SK-N-SH (cell line): ENCODE measurements at regions of chr17 and their contacts with region 1.

Region 1: GRCh38 chr17:76843703-76844484 is 24.3 kb upstream of the MGAT5B start:
- DNase-seq: peak; percentile 59
- H3K4me3 ChIP-seq: no peak overlapping the region
- H3K27ac ChIP-seq: peak overlapping the region in 1 of 2 experiments; percentile 50; a peak in 2 of 4 replicates
- H3K4me1 ChIP-seq: peaks cover 4 to 51% of the 10 kb centered on the region in 2 experiments; a peak in 2 of 4 replicates
- H3K27me3 ChIP-seq: peaks cover 32% of the 10 kb centered on the region; the same call in 1 of the 2 replicates
- CTCF ChIP-seq: no peak
- EP300 ChIP-seq: no peak
- RAD21 ChIP-seq: peak; percentile 31

Region 2: DNA sequence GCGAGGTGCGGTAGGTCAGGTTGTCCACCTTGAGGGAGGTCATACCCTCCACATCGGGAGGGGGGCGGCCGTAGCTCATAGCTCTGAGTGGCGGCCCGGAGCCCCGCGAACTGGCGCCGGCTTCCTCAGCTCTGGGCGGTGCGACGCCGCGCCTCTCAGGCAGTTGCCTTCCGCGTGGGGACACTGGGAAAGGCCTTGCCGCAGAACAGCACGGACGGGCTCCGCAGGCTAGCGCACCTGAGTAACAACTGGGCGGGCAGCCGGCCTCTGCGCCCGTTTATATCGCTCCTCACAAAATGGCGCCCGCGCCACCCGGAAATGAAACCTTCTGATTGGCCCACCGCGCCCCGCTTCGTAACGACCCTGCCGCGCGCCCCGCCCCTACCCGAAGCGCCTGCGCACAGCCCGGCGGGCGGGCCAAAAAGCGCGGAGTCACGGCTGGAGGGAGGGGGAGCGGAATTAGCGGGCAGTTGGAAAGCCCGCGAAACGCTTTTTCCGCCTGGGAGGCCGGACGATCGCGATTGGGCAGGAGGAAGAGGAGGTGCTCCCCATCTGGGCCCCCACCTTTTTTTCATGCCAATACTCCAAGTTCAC is 106.7 kb before region 1 on chr17 and contains the start of gene SRSF2:
- CTCF ChIA-PET with region 1: interaction called, 4 read pairs
- POLR2A ChIA-PET with region 1: interaction called, 16 read pairs
- DNase-seq: peak; percentile 100
- H3K4me3 ChIP-seq: peak within 1 kb of the TSS; percentile 93 to 100
- H3K27ac ChIP-seq: peak within 1 kb of the TSS; percentile 98 to 100
- H3K4me1 ChIP-seq: peaks cover 34 to 44% of the 10 kb centered on the region in 2 experiments
- H3K27me3 ChIP-seq: no peaks in the 10 kb centered on the region
- CTCF ChIP-seq: no peak
- EP300 ChIP-seq: peak in 1 of 2 experiments; percentile 26; a peak in 1 of 4 replicates
- RAD21 ChIP-seq: no peak
- polyA plus RNA-seq, gene SRSF2: 211 and 271 TPM in 2 replicates

Region 3: DNA sequence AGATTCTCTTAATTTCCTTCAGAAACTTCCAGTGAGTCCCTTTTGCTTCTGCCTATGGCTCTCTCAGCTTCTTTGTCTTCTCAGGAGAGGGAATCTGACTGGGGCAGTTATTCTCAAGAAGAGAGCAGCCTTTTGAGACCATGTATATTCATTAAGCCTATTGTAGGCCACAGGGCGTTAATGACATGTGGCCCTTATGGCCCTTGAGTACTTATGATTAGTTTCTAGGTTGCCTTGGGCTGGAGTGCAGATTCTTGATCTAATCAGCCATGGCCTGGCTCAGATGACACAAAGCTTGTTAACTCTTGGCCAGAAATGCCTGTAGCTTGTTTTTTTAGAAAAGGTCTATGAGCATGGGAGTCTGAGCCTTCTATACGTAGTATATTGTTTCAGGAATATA is 88.6 kb before region 1 on chr17:
- CTCF ChIA-PET with region 1: no interaction called
- POLR2A ChIA-PET with region 1: no interaction called
- DNase-seq: peak; percentile 34
- H3K4me3 ChIP-seq: no peak overlapping the region
- H3K27ac ChIP-seq: no peak overlapping the region
- H3K4me1 ChIP-seq: no peaks in the 10 kb centered on the region
- H3K27me3 ChIP-seq: no peaks in the 10 kb centered on the region
- CTCF ChIP-seq: no peak
- EP300 ChIP-seq: no peak
- RAD21 ChIP-seq: no peak

Region 4: DNA sequence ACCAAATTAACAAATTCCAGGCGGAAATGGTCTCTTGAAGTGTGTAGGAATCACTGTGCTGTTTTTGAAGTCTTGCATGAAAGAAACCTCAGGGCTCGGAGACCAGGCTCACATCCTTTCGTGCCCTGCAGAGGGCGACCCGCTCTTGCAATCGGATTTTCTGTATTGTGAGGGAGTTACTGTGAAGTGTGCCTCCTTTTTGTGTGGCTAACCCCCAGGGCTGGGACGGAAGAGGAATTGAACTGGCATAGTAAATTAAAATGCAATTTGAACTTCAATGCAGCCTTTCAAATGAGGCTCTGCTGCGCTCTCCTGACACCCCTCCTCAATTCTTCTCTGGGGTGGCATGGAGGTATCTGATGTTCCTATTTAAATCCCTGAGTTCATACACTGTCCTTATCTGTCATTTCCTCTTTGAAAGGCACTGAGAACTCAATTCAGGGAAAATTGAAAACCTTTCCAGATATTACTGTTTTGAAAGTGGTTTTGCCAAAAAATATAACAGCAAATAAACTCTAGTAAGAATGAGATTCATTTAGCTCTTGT is 27.2 kb before region 1 on chr17:
- CTCF ChIA-PET with region 1: interaction called, 79 read pairs
- POLR2A ChIA-PET with region 1: interaction called, 7 read pairs
- DNase-seq: peak; percentile 85
- H3K4me3 ChIP-seq: no peak overlapping the region
- H3K27ac ChIP-seq: no peak overlapping the region
- H3K4me1 ChIP-seq: peaks cover 0 to 14% of the 10 kb centered on the region in 2 experiments; a peak in 1 of 4 replicates
- H3K27me3 ChIP-seq: peaks cover 12% of the 10 kb centered on the region; the same call in 1 of the 2 replicates
- CTCF ChIP-seq: peak; percentile 93
- EP300 ChIP-seq: no peak
- RAD21 ChIP-seq: peak; percentile 98

Region 5: GRCh38 chr17:76968707-76969597 is 125.1 kb after region 1 on chr17:
- CTCF ChIA-PET with region 1: interaction called, 3 read pairs
- POLR2A ChIA-PET with region 1: interaction called, 11 read pairs
- DNase-seq: peak; percentile 84
- H3K4me3 ChIP-seq: peak overlapping the region; percentile 28 to 39; a peak in 3 of 4 replicates
- H3K27ac ChIP-seq: peak overlapping the region in 1 of 2 experiments; percentile 85; a peak in 2 of 4 replicates
- H3K4me1 ChIP-seq: peaks cover 3 to 20% of the 10 kb centered on the region in 2 experiments; a peak in 1 of 4 replicates
- H3K27me3 ChIP-seq: peaks cover 41% of the 10 kb centered on the region; the same call in 1 of the 2 replicates
- CTCF ChIP-seq: no peak
- EP300 ChIP-seq: peak in 1 of 2 experiments; percentile 45; a peak in 1 of 4 replicates
- RAD21 ChIP-seq: no peak